HepG2 (cell line): ENCODE measurements at regions of chr1 and their contacts with region 1.

Region 1: DNA sequence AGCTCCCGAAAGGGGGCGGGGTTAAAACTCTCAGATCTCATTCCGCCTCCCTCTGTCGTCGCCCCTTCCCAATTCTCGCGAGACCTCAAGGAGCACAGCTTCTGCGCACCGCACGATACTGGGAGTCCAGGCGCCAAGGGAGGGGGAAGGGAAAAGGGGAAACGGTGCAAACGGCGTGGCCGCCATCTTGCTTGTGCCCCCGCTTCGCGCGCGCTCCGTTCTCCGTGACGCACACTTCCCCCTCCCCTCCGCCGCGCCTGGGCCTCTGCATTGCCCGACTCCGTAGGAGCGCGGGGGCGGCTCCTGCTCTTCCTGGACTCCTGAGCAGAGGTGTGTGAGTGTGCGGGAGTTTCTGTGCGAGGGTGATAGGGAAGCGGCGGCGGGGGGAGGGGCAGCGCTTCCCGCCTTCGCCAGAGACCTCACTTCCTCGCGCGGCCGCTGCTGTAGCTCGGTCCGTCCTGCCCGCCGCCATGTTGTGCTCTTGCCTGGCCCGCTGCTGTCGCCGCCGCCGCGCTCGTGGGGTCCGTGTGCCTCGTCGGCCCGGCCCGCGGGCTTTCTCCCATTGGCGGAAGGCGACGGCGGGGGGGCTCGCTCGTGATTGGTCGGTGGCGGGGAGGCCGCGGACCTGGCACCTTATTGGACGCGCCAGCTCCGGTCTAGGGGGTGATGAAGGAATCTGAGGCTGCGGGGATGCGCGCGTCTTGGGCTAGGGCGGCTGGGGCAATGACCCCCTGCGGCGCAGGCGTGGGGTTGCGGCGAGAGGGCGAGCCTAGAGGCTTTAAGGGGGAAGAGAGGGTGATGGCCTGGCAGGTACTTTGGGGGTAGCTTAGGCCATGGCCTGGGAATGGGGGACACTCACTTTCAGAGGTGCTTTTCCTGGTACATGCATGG is at the start of gene NFYC:
- DNase-seq: peak; percentile 99
- ATAC-seq: peak; percentile 92
- H3K4me3 ChIP-seq: peak within 1 kb of the TSS; percentile 74 to 81 (median 81)
- H3K27ac ChIP-seq: peak within 1 kb of the TSS; percentile 97
- H3K4me1 ChIP-seq: peaks cover 55% of the 10 kb centered on the region
- H3K27me3 ChIP-seq: peaks cover 0 to 3% of the 10 kb centered on the region in 2 experiments; a peak in 1 of 5 replicates
- CTCF ChIP-seq: peak; percentile 1; the same call in 1 of the 2 replicates
- EP300 ChIP-seq: peak in 1 of 2 experiments; percentile 41; a peak in 1 of 4 replicates
- POLR2A ChIP-seq: peak; percentile 74 to 97
- RAD21 ChIP-seq: peak; percentile 66
- total RNA-seq, gene NFYC: 33.9 and 41.3 TPM in 2 replicates

Region 2: GRCh38 chr1:40531381-40532061 is 160.3 kb before region 1 on chr1 and contains the start of gene ZNF684:
- CTCF ChIA-PET with region 1: no interaction called
- POLR2A ChIA-PET with region 1: interaction called, 17 read pairs
- in situ Hi-C with region 1: no loop called
- intact Hi-C with region 1: no loop called
- DNase-seq: peak; percentile 96
- ATAC-seq: peak; percentile 95
- H3K4me3 ChIP-seq: peak within 1 kb of the TSS; percentile 78 to 94 (median 85)
- H3K27ac ChIP-seq: peak within 1 kb of the TSS; percentile 82
- H3K4me1 ChIP-seq: peaks cover 46% of the 10 kb centered on the region
- H3K27me3 ChIP-seq: no peaks in the 10 kb centered on the region; a peak in 1 of 5 replicates
- CTCF ChIP-seq: no peak
- EP300 ChIP-seq: peak in 1 of 2 experiments; percentile 48; a peak in 2 of 4 replicates
- POLR2A ChIP-seq: peak; percentile 74 to 76
- RAD21 ChIP-seq: no peak
- total RNA-seq, gene ZNF684: 15.2 and 18.8 TPM in 2 replicates

Region 3: DNA sequence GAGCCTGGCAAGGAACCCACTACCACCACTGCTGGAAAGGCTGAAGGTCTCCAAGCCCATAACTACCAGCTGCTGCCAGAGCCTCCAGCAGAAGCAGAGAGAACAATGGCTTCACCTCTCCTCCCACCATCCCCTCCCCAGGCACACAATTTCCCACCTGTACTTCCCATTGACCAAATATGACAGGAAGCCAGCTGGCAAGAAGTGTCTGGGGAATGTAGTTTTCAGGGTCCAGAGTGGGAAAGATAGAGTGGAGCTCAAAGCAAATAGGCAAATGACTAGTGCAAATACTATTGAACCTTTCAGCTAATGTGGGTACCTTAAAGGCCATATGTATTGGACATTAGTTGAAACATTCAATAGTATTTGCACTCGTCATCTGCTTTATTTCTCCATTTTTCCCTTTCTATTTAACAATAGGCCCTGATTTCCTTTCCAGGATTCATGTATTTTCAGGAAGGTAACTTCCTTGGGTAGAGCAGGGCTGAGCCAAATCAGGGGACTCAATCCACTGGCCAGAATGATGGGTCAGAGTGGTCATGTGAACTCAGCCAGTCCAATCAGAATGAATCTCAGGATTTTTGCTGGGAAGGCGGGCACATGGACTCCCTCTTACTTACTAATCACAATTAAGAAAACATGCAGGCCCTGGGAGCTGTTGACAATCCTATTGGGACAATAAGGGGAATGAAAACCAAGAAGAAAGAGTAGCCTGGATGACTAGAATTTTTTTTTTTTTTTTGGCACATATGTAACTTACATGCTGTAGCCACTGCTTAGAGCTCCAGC is 12.4 kb before region 1 on chr1:
- CTCF ChIA-PET with region 1: no interaction called
- POLR2A ChIA-PET with region 1: interaction called, 13 read pairs
- in situ Hi-C with region 1: no loop called
- intact Hi-C with region 1: no loop called
- DNase-seq: no peak
- ATAC-seq: peak; percentile 46
- H3K4me3 ChIP-seq: no peak overlapping the region
- H3K27ac ChIP-seq: no peak overlapping the region
- H3K4me1 ChIP-seq: peaks cover 21% of the 10 kb centered on the region
- H3K27me3 ChIP-seq: no peaks in the 10 kb centered on the region
- CTCF ChIP-seq: no peak
- EP300 ChIP-seq: no peak
- POLR2A ChIP-seq: no peak
- RAD21 ChIP-seq: no peak

Region 4: DNA sequence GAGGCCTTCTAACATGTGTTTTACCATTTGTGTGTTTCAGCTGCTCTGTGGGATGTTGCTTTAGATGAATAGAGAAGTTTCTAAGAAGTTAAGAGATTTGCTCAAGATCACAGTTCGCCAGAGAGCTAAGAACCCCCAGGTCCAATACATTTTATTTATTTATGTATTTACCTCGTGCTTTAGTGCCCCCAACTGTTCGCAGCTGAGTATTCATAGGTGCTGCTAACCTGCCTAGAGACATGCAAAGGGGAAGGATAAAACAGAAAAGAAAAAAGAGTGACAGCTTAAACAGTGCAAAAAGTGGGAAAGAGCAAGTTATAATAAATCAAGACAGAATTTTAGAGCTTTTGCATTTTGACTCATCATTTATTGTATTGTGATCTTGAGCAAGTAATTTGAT is 30.9 kb after region 1 on chr1:
- CTCF ChIA-PET with region 1: no interaction called
- POLR2A ChIA-PET with region 1: interaction called, 26 read pairs
- in situ Hi-C with region 1: no loop called
- intact Hi-C with region 1: no loop called
- DNase-seq: no peak
- ATAC-seq: no peak
- H3K4me3 ChIP-seq: no peak overlapping the region
- H3K27ac ChIP-seq: no peak overlapping the region
- H3K4me1 ChIP-seq: peaks cover 43% of the 10 kb centered on the region
- H3K27me3 ChIP-seq: no peaks in the 10 kb centered on the region
- CTCF ChIP-seq: no peak
- EP300 ChIP-seq: no peak
- POLR2A ChIP-seq: no peak
- RAD21 ChIP-seq: no peak

Region 5: DNA sequence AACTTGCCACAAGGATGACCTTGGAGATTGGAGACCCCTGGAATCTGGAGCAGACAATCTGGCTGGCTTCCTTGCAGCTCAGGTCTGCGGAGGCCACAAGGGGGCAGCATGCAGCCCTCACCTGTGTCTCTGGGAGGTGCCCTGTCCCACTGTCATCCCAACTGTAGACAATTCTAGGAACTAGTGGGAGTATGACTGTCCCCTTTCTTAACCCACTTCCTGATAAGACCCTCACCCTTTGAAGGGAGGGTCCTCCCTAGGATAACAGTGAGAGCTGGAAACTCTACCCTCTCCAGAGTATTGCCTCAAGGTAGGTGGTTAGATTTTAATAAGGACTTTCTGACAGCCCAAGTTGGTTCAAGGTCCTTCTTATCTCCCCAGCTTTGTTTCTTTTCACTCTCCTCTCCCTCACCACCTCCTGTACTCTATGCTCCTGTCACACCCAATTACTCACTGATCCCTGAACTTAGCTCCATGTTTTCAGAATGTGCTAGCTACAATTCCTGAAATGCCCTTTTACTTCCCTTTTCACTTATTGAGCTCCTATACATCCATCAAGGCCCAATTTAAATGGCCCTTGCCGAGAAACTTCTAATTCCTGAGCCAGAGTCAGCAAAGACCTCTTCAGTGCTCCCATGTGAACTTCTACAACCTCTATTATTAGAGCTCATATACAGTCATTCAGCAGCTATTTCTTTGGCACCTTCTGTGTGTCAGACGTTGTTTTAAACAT is 82.6 kb after region 1 on chr1:
- CTCF ChIA-PET with region 1: no interaction called
- POLR2A ChIA-PET with region 1: interaction called, 17 read pairs
- in situ Hi-C with region 1: no loop called
- intact Hi-C with region 1: no loop called
- DNase-seq: peak; percentile 36
- ATAC-seq: peak; percentile 83
- H3K4me3 ChIP-seq: no peak overlapping the region
- H3K27ac ChIP-seq: peak overlapping the region; percentile 35
- H3K4me1 ChIP-seq: peaks cover 19% of the 10 kb centered on the region
- H3K27me3 ChIP-seq: no peaks in the 10 kb centered on the region
- CTCF ChIP-seq: peak; percentile 90
- EP300 ChIP-seq: no peak
- POLR2A ChIP-seq: no peak
- RAD21 ChIP-seq: peak; percentile 66

Region 6: GRCh38 chr1:40849801-40850592 is 158.2 kb after region 1 on chr1:
- CTCF ChIA-PET with region 1: no interaction called
- POLR2A ChIA-PET with region 1: interaction called, 3 read pairs
- in situ Hi-C with region 1: no loop called
- intact Hi-C with region 1: loop called (anchors 5 kb)
- DNase-seq: peak; percentile 43
- ATAC-seq: peak; percentile 85
- H3K4me3 ChIP-seq: no peak overlapping the region
- H3K27ac ChIP-seq: no peak overlapping the region
- H3K4me1 ChIP-seq: peaks cover 22% of the 10 kb centered on the region; the same call in 1 of the 2 replicates
- H3K27me3 ChIP-seq: peaks cover 0 to 24% of the 10 kb centered on the region in 2 experiments; a peak in 2 of 5 replicates
- CTCF ChIP-seq: peak; percentile 89
- EP300 ChIP-seq: no peak
- POLR2A ChIP-seq: no peak
- RAD21 ChIP-seq: peak; percentile 78

Region 7: DNA sequence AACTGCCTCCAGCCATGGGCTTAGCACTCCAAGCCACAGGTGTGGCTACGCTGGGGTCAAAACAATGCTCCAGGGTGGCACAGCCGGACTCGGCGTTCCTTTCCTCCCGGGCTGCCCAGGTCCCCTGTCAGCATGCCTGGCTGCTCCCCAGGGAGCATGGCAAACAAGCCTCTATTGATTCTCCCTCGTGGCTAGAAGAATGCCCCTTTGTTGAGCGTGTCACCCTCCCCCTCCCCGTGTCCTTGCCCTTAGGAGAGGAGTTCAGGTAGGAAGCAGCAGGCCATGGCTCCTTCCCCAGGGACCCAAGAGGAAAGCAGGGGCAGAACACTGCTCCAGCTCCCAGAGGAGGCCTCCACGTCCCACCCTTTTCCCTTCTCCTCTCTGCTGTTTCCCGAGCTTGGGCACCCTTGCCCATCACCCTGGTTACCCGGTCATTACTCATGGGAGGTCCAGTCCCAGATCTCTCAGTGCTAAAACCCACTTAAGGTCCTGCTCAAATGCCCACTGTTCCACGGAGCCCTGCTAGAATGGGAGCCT is 227.8 kb after region 1 on chr1:
- CTCF ChIA-PET with region 1: no interaction called
- POLR2A ChIA-PET with region 1: no interaction called
- in situ Hi-C with region 1: no loop called
- intact Hi-C with region 1: no loop called
- DNase-seq: peak; percentile 97
- ATAC-seq: peak; percentile 96
- H3K4me3 ChIP-seq: peak overlapping the region in 1 of 3 experiments; percentile 8; a peak in 2 of 6 replicates
- H3K27ac ChIP-seq: peak overlapping the region; percentile 91
- H3K4me1 ChIP-seq: peaks cover 96% of the 10 kb centered on the region
- H3K27me3 ChIP-seq: no peaks in the 10 kb centered on the region
- CTCF ChIP-seq: peak; percentile 36; the same call in 1 of the 2 replicates
- EP300 ChIP-seq: peak; percentile 96 to 99
- POLR2A ChIP-seq: peak; percentile 51 to 79; a peak in 3 of 4 replicates
- RAD21 ChIP-seq: peak; percentile 63